PC-9 (cell line): ENCODE measurements at regions of chr11 and their contacts with region 1.

Region 1: GRCh38 chr11:94747146-94748080 is 20.7 kb upstream of the AMOTL1 start:
- DNase-seq: peak; percentile 75 to 100
- H3K4me3 ChIP-seq: peak overlapping the region; percentile 22; the same call in 1 of the 2 replicates
- H3K27ac ChIP-seq: peak overlapping the region; percentile 99
- H3K4me1 ChIP-seq: peaks cover 96% of the 10 kb centered on the region
- H3K27me3 ChIP-seq: no peaks in the 10 kb centered on the region
- CTCF ChIP-seq: no peak

Region 2: GRCh38 chr11:94678236-94678635 is 69.2 kb before region 1 on chr11:
- CTCF ChIA-PET with region 1: no interaction called
- POLR2A ChIA-PET with region 1: no interaction called
- intact Hi-C with region 1: loop called (anchors 1 kb)
- DNase-seq: peak; percentile 35 to 98
- H3K4me3 ChIP-seq: peak overlapping the region; percentile 36
- H3K27ac ChIP-seq: peak overlapping the region; percentile 76
- H3K4me1 ChIP-seq: peaks cover 48% of the 10 kb centered on the region
- H3K27me3 ChIP-seq: no peaks in the 10 kb centered on the region
- CTCF ChIP-seq: no peak

Region 3: DNA sequence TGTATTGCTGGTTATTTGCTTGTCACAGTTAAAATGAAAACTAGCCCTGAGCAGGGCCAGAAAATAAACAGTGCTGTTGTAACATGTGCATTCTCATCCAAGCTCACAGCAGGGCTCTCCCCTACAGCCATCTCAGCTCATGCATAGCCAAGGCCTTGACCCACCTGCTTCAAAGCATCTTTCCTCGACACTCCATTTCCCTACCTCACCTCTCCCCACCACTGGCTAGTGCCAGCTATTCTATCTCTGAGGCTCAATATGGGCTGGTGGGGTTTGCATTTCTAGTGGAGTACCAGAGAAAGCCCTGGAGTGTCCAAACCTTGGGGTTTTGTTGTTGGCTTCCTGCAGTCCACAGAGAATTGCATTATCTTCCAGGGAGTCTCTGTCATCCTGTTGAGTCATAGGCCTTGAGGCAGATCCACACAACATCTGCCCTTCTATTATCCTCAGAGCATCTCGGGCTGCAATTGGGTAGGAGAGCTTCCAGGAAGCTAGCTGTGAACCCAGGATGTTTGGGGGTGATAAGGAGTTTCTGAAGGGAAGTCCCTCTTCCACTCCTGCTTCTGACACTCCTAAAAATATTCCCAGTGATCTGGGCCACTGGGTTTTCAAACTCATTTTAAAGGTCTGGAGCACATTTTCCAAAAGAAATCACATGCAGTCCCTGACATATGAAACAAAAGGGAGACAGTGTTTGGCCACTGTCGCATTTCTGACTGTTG is 15.4 kb before region 1 on chr11:
- CTCF ChIA-PET with region 1: no interaction called
- POLR2A ChIA-PET with region 1: interaction called, 3 read pairs
- intact Hi-C with region 1: loop called (anchors 2 kb)
- DNase-seq: peak in 1 of 2 experiments; percentile 83
- H3K4me3 ChIP-seq: no peak overlapping the region
- H3K27ac ChIP-seq: peak overlapping the region; percentile 86
- H3K4me1 ChIP-seq: peaks cover 99% of the 10 kb centered on the region
- H3K27me3 ChIP-seq: no peaks in the 10 kb centered on the region
- CTCF ChIP-seq: no peak

Region 4: GRCh38 chr11:94762208-94762607 is 14.8 kb after region 1 on chr11:
- CTCF ChIA-PET with region 1: interaction called, 15 read pairs
- POLR2A ChIA-PET with region 1: interaction called, 4 read pairs
- intact Hi-C with region 1: loop called (anchors 1 kb)
- DNase-seq: peak; percentile 28 to 67
- H3K4me3 ChIP-seq: no peak overlapping the region
- H3K27ac ChIP-seq: no peak overlapping the region
- H3K4me1 ChIP-seq: peaks cover 32% of the 10 kb centered on the region
- H3K27me3 ChIP-seq: no peaks in the 10 kb centered on the region
- CTCF ChIP-seq: peak; percentile 73

Region 5: GRCh38 chr11:94794287-94795168 is 47.1 kb after region 1 on chr11:
- CTCF ChIA-PET with region 1: no interaction called
- POLR2A ChIA-PET with region 1: no interaction called
- intact Hi-C with region 1: loop called (anchors 1 kb)
- DNase-seq: peak; percentile 70 to 97
- H3K4me3 ChIP-seq: peak overlapping the region; percentile 34
- H3K27ac ChIP-seq: peak overlapping the region; percentile 91
- H3K4me1 ChIP-seq: peaks cover 76% of the 10 kb centered on the region
- H3K27me3 ChIP-seq: no peaks in the 10 kb centered on the region
- CTCF ChIP-seq: no peak